ENCODE measurements at regions of chr7 and their contacts with region 1.

Region 1: GRCh38 chr7:134432296-134433152 is 26.4 kb downstream of the AKR1B1 start:
- DNase-seq: peak; percentile 78 to 86 (median 84)
- H3K4me3 ChIP-seq: peak overlapping the region in 2 of 3 experiments; percentile 13 to 66
- H3K4me3 Mint-ChIP-seq: peak overlapping the region; percentile 72 to 86
- H3K27ac ChIP-seq: peak overlapping the region; percentile 22 to 67
- H3K27ac Mint-ChIP-seq: peak overlapping the region; percentile 45 to 89 (median 77)
- H3K4me1 ChIP-seq: peaks cover 17 to 18% of the 10 kb centered on the region in 2 donors
- H3K4me1 Mint-ChIP-seq: peaks cover 19% of the 10 kb centered on the region
- H3K27me3 ChIP-seq: no peaks in the 10 kb centered on the region
- H3K27me3 Mint-ChIP-seq: peaks cover 0 to 7% (median 0%) of the 10 kb centered on the region in 3 donors
- CTCF ChIP-seq: peak; percentile 87

Region 2: GRCh38 chr7:133633062-133633461 is 799.5 kb before region 1 on chr7:
- intact Hi-C with region 1: no loop called
- DNase-seq: peak; percentile 39 to 68 (median 67)
- H3K4me3 ChIP-seq: peak overlapping the region in 1 of 3 experiments; percentile 36
- H3K4me3 Mint-ChIP-seq: no peak overlapping the region
- H3K27ac ChIP-seq: peak overlapping the region in 1 of 2 donors; percentile 59
- H3K27ac Mint-ChIP-seq: peak overlapping the region in 3 of 7 donors; percentile 11 to 52 (median 45)
- H3K4me1 ChIP-seq: peaks cover 11 to 12% of the 10 kb centered on the region in 2 donors
- H3K4me1 Mint-ChIP-seq: peaks cover 9% of the 10 kb centered on the region
- H3K27me3 ChIP-seq: no peaks in the 10 kb centered on the region
- H3K27me3 Mint-ChIP-seq: no peaks in the 10 kb centered on the region
- CTCF ChIP-seq: no peak

Region 3: DNA sequence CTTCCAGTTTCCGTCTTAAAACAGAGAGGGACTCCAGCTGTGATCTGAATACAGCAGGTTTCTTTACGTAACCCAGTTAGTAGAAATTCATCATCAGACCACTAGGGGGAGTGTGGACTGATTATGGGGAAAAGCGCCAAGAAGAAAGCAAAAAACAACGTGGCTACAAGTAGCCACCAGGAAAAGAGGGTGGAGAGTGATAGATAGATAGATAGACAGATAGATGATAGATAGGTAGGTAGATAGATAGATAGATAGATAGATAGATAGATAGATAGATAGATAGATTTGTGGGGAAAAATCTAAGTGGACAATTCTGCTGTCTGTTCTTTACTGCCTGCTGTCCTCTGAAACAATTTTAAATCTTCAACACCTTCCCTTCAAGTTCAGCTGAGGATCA is 82.1 kb after region 1 on chr7:
- intact Hi-C with region 1: loop called (anchors 2 to 5 kb)
- DNase-seq: peak; percentile 49 to 69 (median 65)
- H3K4me3 ChIP-seq: no peak overlapping the region
- H3K4me3 Mint-ChIP-seq: peak overlapping the region in 1 of 2 donors; percentile 33
- H3K27ac ChIP-seq: no peak overlapping the region
- H3K27ac Mint-ChIP-seq: no peak overlapping the region
- H3K4me1 ChIP-seq: peaks cover 5 to 13% of the 10 kb centered on the region in 2 donors
- H3K4me1 Mint-ChIP-seq: peaks cover 18% of the 10 kb centered on the region
- H3K27me3 ChIP-seq: no peaks in the 10 kb centered on the region
- H3K27me3 Mint-ChIP-seq: peaks cover 7 to 20% (median 11%) of the 10 kb centered on the region in 3 donors
- CTCF ChIP-seq: peak; percentile 92

Region 4: DNA sequence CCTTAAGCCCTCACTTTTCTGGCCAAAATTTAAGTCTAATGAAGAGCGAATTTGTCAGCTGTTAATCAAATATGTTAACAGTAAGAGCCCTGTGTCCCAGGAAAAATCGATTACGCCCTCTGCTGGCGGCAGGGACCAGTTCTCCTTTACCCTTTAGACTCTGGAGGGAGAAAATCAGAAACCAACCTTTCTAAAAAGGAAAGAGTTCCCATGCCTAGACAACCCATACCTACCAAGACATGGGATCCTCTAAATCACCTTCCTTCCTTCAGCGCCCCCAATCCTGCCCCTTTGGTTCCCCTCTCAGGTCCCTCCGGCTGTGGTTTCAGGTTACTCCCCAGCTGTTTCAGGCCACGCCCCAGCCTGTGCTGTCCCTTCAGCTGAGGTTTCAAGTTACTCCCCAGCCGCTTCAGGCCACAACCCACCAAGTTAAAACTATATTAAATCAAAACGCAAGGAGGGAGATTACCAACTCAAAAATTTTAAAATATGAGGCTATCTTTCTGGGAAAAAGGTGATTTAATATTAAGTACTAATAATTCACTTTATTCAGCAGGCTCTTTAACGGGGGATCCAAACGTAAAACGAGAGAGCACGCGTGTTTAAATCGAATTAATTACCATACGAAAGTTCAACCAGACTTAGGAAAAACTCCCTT is 115.0 kb after region 1 on chr7:
- intact Hi-C with region 1: loop called (anchors 2 to 5 kb)
- DNase-seq: peak; percentile 44 to 64 (median 54)
- H3K4me3 ChIP-seq: no peak overlapping the region
- H3K4me3 Mint-ChIP-seq: peak overlapping the region; percentile 53 to 78
- H3K27ac ChIP-seq: no peak overlapping the region
- H3K27ac Mint-ChIP-seq: no peak overlapping the region
- H3K4me1 ChIP-seq: peaks cover 0 to 4% of the 10 kb centered on the region in 2 donors
- H3K4me1 Mint-ChIP-seq: peaks cover 4% of the 10 kb centered on the region
- H3K27me3 ChIP-seq: no peaks in the 10 kb centered on the region
- H3K27me3 Mint-ChIP-seq: peaks cover 6 to 13% (median 9%) of the 10 kb centered on the region in 3 donors
- CTCF ChIP-seq: peak; percentile 90

Region 5: DNA sequence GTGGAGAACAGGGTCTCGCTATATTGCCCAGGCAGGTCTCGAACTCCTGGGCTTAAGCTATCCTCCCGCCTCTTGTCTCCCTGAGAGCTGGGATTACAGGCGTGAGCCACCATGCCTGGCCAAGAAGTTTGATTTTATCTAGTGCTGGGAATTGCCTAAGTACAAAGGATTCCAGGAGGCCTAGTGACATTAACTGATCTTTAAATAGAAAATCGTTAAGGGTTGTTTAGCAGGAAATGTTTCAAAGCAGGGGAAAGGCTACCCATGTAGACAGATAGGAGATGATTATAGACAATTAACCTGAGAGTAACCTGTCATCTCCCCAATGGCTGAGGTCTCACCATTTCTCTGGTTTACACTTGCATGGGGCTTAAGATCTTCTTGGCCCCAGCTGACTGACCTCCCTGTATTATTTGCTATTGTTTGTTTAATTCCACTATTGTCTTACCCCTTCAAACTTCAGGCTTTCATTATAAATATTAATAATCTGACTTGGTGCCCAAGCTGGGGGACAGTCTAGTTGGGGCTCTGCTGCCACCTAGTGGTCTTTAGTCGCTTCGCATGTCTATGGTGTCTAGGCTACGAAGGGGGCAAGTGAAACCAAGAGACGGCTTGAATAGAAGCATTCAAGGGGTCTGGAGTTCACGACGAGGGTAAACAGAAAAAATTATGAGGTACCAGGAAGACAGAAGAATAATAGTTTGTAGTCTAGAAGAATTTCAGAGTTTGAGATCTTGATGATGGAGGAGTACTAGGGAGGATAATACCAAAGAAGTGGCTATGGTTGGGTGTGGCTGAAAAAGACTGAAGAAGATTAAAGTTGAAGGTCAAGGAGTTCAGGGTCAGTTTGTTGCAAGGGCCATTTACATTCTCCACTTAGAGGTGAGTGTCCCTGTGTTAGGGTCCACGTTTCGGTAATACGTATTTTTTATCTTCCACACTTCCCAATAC is 173.7 kb after region 1 on chr7:
- intact Hi-C with region 1: loop called (anchors 5 to 10 kb)
- DNase-seq: peak; percentile 37 to 71 (median 55)
- H3K4me3 ChIP-seq: no peak overlapping the region
- H3K4me3 Mint-ChIP-seq: peak overlapping the region; percentile 55 to 87
- H3K27ac ChIP-seq: no peak overlapping the region
- H3K27ac Mint-ChIP-seq: no peak overlapping the region
- H3K4me1 ChIP-seq: peaks cover 19 to 23% of the 10 kb centered on the region in 2 donors
- H3K4me1 Mint-ChIP-seq: peaks cover 27% of the 10 kb centered on the region
- H3K27me3 ChIP-seq: no peaks in the 10 kb centered on the region
- H3K27me3 Mint-ChIP-seq: peaks cover 0 to 11% (median 1%) of the 10 kb centered on the region in 3 donors
- CTCF ChIP-seq: peak; percentile 92

Region 6: GRCh38 chr7:134750083-134751062 is 317.8 kb after region 1 on chr7:
- intact Hi-C with region 1: loop called in 1 of 2 experiments (anchors 10 kb)
- DNase-seq: peak; percentile 35 to 62 (median 53)
- H3K4me3 ChIP-seq: no peak overlapping the region
- H3K4me3 Mint-ChIP-seq: no peak overlapping the region
- H3K27ac ChIP-seq: no peak overlapping the region
- H3K27ac Mint-ChIP-seq: no peak overlapping the region
- H3K4me1 ChIP-seq: no peaks in the 10 kb centered on the region
- H3K4me1 Mint-ChIP-seq: no peaks in the 10 kb centered on the region
- H3K27me3 ChIP-seq: no peaks in the 10 kb centered on the region
- H3K27me3 Mint-ChIP-seq: peaks cover 0 to 3% (median under 1%) of the 10 kb centered on the region in 3 donors
- CTCF ChIP-seq: peak; percentile 85

Region 7: GRCh38 chr7:134943764-134944400 is 511.4 kb after region 1 on chr7:
- intact Hi-C with region 1: loop called in 1 of 2 experiments (anchors 10 kb)
- DNase-seq: no peak
- H3K4me3 ChIP-seq: no peak overlapping the region
- H3K4me3 Mint-ChIP-seq: no peak overlapping the region
- H3K27ac ChIP-seq: no peak overlapping the region
- H3K27ac Mint-ChIP-seq: no peak overlapping the region
- H3K4me1 ChIP-seq: no peaks in the 10 kb centered on the region
- H3K4me1 Mint-ChIP-seq: peaks cover 4% of the 10 kb centered on the region
- H3K27me3 ChIP-seq: no peaks in the 10 kb centered on the region
- H3K27me3 Mint-ChIP-seq: peaks cover 0 to 2% (median 1%) of the 10 kb centered on the region in 3 donors
- CTCF ChIP-seq: no peak

Region 8: DNA sequence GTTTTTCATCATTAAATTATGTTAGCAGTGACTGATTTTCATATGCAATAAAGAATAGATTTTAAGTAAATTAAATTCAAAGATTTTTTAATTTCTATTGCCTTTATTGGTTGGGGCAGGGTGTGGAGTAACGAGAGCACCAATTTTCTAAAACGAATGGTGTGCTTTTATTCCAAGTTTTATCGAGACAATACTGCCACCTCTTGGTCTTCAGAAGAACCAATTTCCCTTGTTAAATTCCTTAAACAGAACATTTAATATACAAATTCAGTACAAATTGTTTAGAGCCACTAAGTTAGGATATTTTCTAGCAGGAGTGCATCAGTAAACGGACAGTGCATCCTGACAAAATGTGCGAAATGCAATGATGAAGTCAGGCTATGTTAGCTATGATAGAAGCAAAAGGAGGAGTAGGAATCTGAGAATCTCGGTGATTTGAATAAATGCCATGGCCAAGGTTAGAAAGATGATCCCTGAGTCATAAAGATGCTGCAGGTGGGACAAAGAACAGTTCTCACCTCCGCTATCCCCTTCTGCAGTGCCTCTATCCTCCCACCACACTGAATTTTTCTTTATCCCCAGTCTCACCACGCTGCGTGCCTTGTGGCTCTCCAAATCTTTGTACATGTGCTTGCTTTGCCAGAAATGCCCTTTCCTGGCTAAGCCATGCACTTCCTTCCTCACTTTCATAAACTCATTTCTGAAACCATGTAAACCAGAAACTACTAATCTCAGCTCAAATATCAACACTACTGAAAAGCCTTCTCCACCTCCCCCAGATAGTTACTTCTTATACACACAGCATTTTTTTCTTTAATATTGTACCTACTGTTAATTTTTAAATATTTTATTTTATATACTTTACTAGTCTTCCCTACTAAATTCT is 521.9 kb after region 1 on chr7:
- intact Hi-C with region 1: loop called (anchors 10 kb)
- DNase-seq: peak in 2 of 3 donors; percentile 6 to 12
- H3K4me3 ChIP-seq: no peak overlapping the region
- H3K4me3 Mint-ChIP-seq: no peak overlapping the region
- H3K27ac ChIP-seq: no peak overlapping the region
- H3K27ac Mint-ChIP-seq: no peak overlapping the region
- H3K4me1 ChIP-seq: no peaks in the 10 kb centered on the region
- H3K4me1 Mint-ChIP-seq: no peaks in the 10 kb centered on the region
- H3K27me3 ChIP-seq: no peaks in the 10 kb centered on the region
- H3K27me3 Mint-ChIP-seq: peaks cover 0 to 5% (median 2%) of the 10 kb centered on the region in 3 donors
- CTCF ChIP-seq: peak; percentile 69

Measured in CD14-positive monocyte (primary cell).